CD8-positive, alpha-beta T cell (primary cell): ENCODE measurements at regions of chr2 and their contacts with region 1.

Region 1: GRCh38 chr2:169109502-169110409 is 40.4 kb downstream of the DHRS9 start:
- DNase-seq: peak; percentile 43 to 85 (median 74)
- ATAC-seq: peak; percentile 22
- H3K4me3 ChIP-seq: no peak overlapping the region
- H3K4me3 Mint-ChIP-seq: no peak overlapping the region
- H3K27ac ChIP-seq: no peak overlapping the region
- H3K27ac Mint-ChIP-seq: no peak overlapping the region
- H3K4me1 ChIP-seq: peaks cover 52% of the 10 kb centered on the region
- H3K4me1 Mint-ChIP-seq: peaks cover 51% of the 10 kb centered on the region
- H3K27me3 ChIP-seq: no peaks in the 10 kb centered on the region
- H3K27me3 Mint-ChIP-seq: peaks cover 3% of the 10 kb centered on the region
- CTCF ChIP-seq: peak; percentile 92

Region 2: DNA sequence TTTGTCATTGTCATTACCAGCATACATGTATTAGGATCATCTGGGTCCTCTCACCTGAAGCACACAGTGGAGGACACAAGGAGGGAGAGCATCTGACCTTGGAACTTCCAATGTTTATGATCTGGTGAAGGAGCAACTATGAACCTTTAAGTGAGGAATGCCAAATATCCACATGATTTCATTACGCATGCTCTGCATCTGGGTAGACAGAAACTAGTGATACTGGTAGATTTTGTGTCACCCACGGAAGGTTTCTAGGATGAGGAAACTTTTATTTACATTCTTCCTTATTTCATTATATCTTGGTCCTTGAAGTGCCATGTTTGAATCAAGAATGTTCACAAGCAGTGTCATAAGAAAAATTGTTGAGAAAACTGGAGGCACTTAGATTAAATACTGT is 251.6 kb before region 1 on chr2:
- CTCF ChIA-PET with region 1: no interaction called
- POLR2A ChIA-PET with region 1: no interaction called
- intact Hi-C with region 1: no loop called
- DNase-seq: no peak
- ATAC-seq: no peak
- H3K4me3 ChIP-seq: no peak overlapping the region
- H3K4me3 Mint-ChIP-seq: no peak overlapping the region
- H3K27ac ChIP-seq: no peak overlapping the region
- H3K27ac Mint-ChIP-seq: no peak overlapping the region
- H3K4me1 ChIP-seq: no peaks in the 10 kb centered on the region
- H3K4me1 Mint-ChIP-seq: no peaks in the 10 kb centered on the region
- H3K27me3 ChIP-seq: no peaks in the 10 kb centered on the region
- H3K27me3 Mint-ChIP-seq: no peaks in the 10 kb centered on the region
- CTCF ChIP-seq: no peak

Region 3: DNA sequence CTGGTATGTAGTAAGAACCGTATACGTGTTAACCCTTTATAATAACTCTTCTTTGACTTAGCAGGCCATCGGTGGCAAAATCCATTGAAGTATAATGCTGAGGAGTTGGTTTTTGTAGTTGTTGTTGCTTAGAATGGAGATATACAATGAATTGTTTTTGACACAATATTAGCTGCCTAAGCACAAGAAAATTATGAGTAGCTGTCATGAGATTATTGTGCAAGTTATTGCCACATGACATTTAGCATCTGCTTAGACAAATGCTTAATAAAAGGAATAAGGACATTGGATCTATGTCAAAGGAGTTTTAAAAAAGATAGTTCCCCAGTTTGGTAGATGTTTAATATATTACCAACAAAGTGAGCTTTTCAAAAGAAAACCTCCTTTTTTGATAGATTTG is 138.5 kb before region 1 on chr2:
- CTCF ChIA-PET with region 1: interaction called, 12 read pairs
- POLR2A ChIA-PET with region 1: interaction called, 3 read pairs
- intact Hi-C with region 1: no loop called
- DNase-seq: no peak
- ATAC-seq: no peak
- H3K4me3 ChIP-seq: no peak overlapping the region
- H3K4me3 Mint-ChIP-seq: no peak overlapping the region
- H3K27ac ChIP-seq: no peak overlapping the region
- H3K27ac Mint-ChIP-seq: no peak overlapping the region
- H3K4me1 ChIP-seq: no peaks in the 10 kb centered on the region
- H3K4me1 Mint-ChIP-seq: peaks cover 2% of the 10 kb centered on the region
- H3K27me3 ChIP-seq: no peaks in the 10 kb centered on the region
- H3K27me3 Mint-ChIP-seq: no peaks in the 10 kb centered on the region
- CTCF ChIP-seq: no peak

Region 4: DNA sequence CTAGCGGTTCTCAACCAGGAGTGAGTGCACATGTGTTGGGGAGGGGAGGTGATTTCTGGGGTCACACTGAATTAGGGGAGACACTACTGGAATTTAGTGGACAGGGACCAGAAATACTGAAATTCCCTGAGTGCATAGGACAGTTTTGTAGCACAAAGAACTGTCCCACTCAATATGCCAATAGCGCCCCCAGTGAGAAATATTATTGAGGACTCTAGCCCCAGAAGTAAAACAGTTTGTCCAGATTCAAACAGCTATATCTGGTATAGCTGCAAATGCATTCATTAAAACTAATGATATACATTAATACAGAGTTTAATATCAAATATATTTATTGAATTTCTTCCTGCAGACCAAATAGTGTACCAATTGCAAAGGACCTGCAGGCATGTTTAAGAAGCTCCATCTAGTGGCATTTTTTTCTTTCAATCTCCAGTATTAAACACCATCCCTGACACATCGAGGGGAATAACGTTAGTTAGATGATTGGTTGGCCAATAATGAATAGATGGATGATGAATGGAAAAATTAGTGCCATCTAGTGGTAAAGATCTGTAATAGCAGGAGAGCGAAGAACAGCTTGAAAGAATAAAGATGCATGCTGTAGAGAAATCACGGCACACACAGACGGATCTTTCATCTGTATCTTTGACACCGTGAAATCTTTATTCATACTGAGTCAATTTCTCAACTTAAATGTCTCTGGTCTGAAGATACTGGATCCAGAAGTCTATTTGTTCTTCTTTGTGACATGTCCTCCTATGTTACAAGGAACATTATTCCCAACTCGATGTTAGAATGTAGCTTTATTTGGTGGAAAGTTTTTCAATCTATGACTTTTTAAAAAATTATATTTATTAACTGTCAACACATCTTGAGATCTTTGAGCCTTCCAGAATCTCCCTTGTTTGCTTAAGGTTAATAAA is 22.1 kb after region 1 on chr2:
- CTCF ChIA-PET with region 1: interaction called, 94 read pairs
- POLR2A ChIA-PET with region 1: interaction called, 9 read pairs
- intact Hi-C with region 1: loop called (anchors 1 to 2 kb)
- DNase-seq: peak in 2 of 9 experiments; percentile 73 to 77
- ATAC-seq: peak; percentile 91
- H3K4me3 ChIP-seq: no peak overlapping the region
- H3K4me3 Mint-ChIP-seq: no peak overlapping the region
- H3K27ac ChIP-seq: no peak overlapping the region
- H3K27ac Mint-ChIP-seq: no peak overlapping the region
- H3K4me1 ChIP-seq: no peaks in the 10 kb centered on the region
- H3K4me1 Mint-ChIP-seq: peaks cover 13% of the 10 kb centered on the region
- H3K27me3 ChIP-seq: no peaks in the 10 kb centered on the region
- H3K27me3 Mint-ChIP-seq: no peaks in the 10 kb centered on the region
- CTCF ChIP-seq: peak; percentile 95

Region 5: DNA sequence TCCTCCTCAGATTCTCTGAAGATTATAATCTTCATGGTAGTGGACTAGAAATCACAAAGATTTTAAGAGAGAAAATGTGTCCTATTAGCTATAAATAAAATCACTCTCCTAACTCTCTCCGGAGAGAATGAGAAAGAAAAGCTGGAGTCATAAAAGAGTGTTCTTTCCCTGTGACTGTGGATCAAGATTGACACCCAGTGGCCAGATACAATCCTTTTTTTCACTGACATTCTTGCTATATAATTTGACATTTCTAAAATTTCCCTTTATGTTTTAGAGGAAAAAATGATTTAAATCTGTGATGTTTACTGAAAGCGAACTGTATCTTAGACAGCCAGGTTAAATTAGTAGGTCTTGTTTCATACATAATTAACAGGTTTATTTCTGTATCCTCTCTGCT is 287.9 kb after region 1 on chr2:
- CTCF ChIA-PET with region 1: no interaction called
- POLR2A ChIA-PET with region 1: no interaction called
- intact Hi-C with region 1: no loop called
- DNase-seq: peak in 2 of 9 experiments; percentile 6 to 8
- ATAC-seq: no peak
- H3K4me3 ChIP-seq: no peak overlapping the region
- H3K4me3 Mint-ChIP-seq: no peak overlapping the region
- H3K27ac ChIP-seq: no peak overlapping the region
- H3K27ac Mint-ChIP-seq: no peak overlapping the region
- H3K4me1 ChIP-seq: no peaks in the 10 kb centered on the region
- H3K4me1 Mint-ChIP-seq: no peaks in the 10 kb centered on the region
- H3K27me3 ChIP-seq: no peaks in the 10 kb centered on the region
- H3K27me3 Mint-ChIP-seq: peaks cover 20% of the 10 kb centered on the region
- CTCF ChIP-seq: no peak

Region 6: GRCh38 chr2:169528271-169528701 is 418.5 kb after region 1 on chr2:
- CTCF ChIA-PET with region 1: no interaction called
- POLR2A ChIA-PET with region 1: no interaction called
- intact Hi-C with region 1: loop called in 1 of 2 experiments (anchors 10 kb)
- DNase-seq: peak; percentile 50 to 82 (median 76)
- ATAC-seq: peak; percentile 89
- H3K4me3 ChIP-seq: no peak overlapping the region
- H3K4me3 Mint-ChIP-seq: no peak overlapping the region
- H3K27ac ChIP-seq: no peak overlapping the region
- H3K27ac Mint-ChIP-seq: no peak overlapping the region
- H3K4me1 ChIP-seq: no peaks in the 10 kb centered on the region
- H3K4me1 Mint-ChIP-seq: no peaks in the 10 kb centered on the region
- H3K27me3 ChIP-seq: no peaks in the 10 kb centered on the region
- H3K27me3 Mint-ChIP-seq: no peaks in the 10 kb centered on the region
- CTCF ChIP-seq: peak; percentile 88

Region 7: DNA sequence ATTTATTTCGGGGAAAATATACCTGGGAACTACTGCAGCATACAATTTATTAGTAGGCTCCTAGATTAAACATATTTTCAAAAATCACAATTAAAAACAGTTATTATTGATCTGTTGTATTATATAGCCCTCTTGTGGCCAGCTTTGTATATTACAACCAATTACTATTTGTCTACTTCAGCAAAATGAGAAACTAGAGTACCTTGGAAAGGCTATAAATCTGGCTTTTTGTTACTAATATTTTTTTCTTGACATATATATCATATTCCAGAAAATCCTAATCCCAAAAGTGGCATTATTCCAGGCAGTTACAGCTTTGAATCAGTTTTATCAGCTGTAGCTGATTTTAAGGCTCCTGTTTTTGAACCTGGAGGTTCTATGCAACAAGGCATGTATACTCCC is 818.7 kb after region 1 on chr2:
- CTCF ChIA-PET with region 1: interaction called, 3 read pairs
- POLR2A ChIA-PET with region 1: no interaction called
- intact Hi-C with region 1: loop called in 1 of 2 experiments (anchors 2 kb)
- DNase-seq: peak in 2 of 9 experiments; percentile 49 to 58
- ATAC-seq: peak; percentile 54
- H3K4me3 ChIP-seq: no peak overlapping the region
- H3K4me3 Mint-ChIP-seq: no peak overlapping the region
- H3K27ac ChIP-seq: no peak overlapping the region
- H3K27ac Mint-ChIP-seq: no peak overlapping the region
- H3K4me1 ChIP-seq: no peaks in the 10 kb centered on the region
- H3K4me1 Mint-ChIP-seq: no peaks in the 10 kb centered on the region
- H3K27me3 ChIP-seq: no peaks in the 10 kb centered on the region
- H3K27me3 Mint-ChIP-seq: no peaks in the 10 kb centered on the region
- CTCF ChIP-seq: peak; percentile 97